ENCODE measurements at regions of chr6 and their contacts with region 1.

Region 1: DNA sequence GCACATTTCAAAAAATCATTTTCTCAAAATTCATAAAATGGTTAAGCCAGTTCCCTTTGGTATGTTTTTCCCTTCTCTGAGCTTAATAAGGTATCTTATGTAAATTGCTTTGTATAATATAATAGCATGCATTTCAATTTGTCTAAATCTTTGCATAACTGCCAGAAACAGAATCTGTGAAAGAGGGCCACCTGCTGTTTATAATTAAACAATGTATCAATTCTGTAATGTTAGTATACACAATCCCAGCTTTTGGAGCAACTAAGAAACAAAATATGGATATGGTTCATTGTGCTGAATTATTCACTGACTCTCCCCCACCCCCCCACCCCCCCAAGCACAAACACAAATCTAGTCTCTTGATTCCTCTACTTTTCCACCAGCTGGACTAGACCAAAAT is 54.8 kb downstream of the GPX5 start:
- DNase-seq: no peak
- H3K4me3 Mint-ChIP-seq: no peak overlapping the region
- H3K27ac Mint-ChIP-seq: no peak overlapping the region
- H3K4me1 Mint-ChIP-seq: no peaks in the 10 kb centered on the region
- H3K27me3 Mint-ChIP-seq: peaks cover 6% of the 10 kb centered on the region

Region 2: DNA sequence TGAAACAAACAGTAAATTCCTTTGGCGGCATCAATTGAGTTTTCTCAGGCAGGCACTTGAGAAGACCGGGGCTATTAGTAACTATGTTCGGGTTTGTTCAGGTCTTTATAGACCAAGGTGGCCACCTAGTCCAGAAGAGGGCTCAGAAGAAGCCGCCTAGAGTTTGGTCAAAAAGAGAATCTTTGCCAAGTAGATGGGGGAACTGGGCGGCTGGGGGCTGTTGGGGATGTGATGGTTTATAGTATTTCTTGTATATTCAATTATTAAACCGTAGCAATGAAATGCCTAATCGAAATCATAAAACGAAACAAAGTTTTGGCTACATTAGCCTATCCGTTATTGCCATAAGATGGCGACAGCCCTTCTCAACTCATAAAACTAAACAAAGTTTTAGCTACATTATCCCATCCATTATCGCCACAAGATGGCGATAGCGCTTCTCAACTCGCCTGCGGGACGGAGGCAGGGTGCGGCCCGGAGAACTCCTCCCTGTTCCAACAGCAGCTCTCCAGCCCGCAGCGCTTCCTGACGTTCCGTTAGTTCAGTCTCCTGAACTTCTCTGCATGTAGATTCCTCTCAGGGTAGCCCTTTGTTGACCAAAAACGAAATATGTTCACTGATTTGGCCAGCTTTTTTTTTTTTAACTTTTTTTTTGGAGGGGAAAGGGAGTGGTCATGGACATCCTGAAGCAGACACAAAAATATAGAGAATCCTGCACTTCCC is 1453.5 kb before region 1 on chr6:
- intact Hi-C with region 1: no loop called
- DNase-seq: peak; percentile 83
- H3K4me3 Mint-ChIP-seq: peak overlapping the region; percentile 88
- H3K27ac Mint-ChIP-seq: peak overlapping the region; percentile 90
- H3K4me1 Mint-ChIP-seq: peaks cover 37% of the 10 kb centered on the region
- H3K27me3 Mint-ChIP-seq: no peaks in the 10 kb centered on the region

Region 3: GRCh38 chr6:28496099-28496779 is 84.2 kb before region 1 on chr6:
- intact Hi-C with region 1: loop called (anchors 5 kb)
- DNase-seq: no peak
- H3K4me3 Mint-ChIP-seq: no peak overlapping the region
- H3K27ac Mint-ChIP-seq: no peak overlapping the region
- H3K4me1 Mint-ChIP-seq: no peaks in the 10 kb centered on the region
- H3K27me3 Mint-ChIP-seq: peaks cover 22% of the 10 kb centered on the region

Region 4: DNA sequence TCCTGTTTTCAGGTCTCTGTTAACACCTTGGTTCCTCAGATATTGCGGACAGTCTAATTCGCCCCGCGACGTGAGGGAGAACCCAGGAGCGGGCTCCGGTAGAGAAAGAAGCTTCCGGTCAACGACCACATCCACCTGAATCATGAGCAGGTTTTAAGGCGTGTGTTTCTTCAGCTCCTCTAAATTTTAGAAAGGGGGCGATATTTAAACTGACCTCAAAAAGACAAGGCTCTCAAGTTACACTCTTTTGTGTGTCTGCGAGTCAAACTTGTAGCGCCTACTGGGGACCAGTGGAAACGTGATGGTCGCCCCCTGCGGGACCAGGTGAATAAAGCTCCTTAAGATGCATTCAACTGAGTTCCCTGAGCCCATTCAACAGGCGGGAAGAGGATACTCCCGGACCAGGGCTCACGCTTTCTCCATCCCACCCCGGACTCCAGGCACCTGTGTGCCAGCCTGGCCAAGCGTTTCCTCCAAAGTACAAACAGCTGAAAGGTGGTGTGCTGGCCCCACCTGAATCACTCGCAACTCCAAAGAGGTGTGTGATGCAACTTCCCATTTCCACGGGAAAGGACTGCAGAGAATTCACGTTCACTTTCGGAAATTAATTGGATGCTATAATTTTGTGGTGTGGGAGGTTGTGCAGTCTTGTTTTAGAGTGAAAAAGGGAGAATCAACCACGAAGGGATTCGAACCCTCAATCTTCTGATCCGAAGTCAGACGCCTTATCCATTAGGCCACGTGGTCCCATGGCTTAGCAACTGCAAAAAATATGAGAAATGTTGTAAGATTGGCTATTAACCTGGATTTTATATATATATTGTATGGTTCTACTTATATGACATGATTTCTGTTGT is 37.8 kb before region 1 on chr6:
- intact Hi-C with region 1: no loop called
- DNase-seq: peak; percentile 18
- H3K4me3 Mint-ChIP-seq: peak overlapping the region; percentile 77
- H3K27ac Mint-ChIP-seq: peak overlapping the region; percentile 44
- H3K4me1 Mint-ChIP-seq: peaks cover 28% of the 10 kb centered on the region
- H3K27me3 Mint-ChIP-seq: peaks cover 44% of the 10 kb centered on the region

Region 5: DNA sequence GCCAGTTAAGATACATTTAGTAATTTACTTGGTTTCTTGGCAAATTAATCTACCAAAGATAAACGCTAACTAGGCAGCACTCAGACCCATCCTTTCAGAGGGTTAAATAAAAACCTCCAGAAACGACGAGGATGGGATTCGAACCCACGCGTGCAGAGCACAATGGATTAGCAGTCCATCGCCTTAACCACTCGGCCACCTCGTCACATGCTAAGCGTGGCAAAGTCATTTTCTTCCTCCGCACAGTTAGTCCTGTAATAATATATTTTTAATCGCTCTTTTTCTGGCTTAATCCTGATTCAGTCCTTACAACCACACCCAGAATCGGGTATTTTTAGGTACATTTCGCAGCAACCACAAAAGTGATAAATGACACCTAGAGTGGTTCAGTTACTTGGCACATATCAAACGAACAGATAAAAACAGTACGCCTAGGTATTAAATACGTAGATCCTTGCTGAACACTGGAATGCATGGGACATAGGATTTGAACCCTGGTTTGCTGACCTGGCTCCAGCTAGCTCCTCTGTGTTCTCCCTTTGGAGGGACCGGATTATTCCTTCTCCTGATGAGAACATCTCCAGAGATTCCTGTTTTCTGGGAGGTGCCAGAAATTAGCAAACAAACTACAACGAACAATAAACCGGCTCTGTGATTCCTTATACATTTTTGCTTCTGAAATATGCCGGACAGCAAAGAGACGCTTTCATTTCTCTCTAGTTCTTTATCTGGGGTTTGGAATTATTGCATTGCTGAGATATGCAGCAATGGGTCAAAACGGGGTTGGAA is 16.9 kb after region 1 on chr6:
- intact Hi-C with region 1: no loop called
- DNase-seq: no peak
- H3K4me3 Mint-ChIP-seq: peak overlapping the region; percentile 37
- H3K27ac Mint-ChIP-seq: no peak overlapping the region
- H3K4me1 Mint-ChIP-seq: peaks cover 8% of the 10 kb centered on the region
- H3K27me3 Mint-ChIP-seq: peaks cover 42% of the 10 kb centered on the region

Measured in activated T-helper 1 cell treated with anti-CD3 and anti-CD28 coated beads, Interleukin-12 subunit alpha, Interleukin-12 subunit beta, Interleukin-2, Interleukin-4 antibody, amounts not matched to agents 30 ng/mL and 10 ng/mL and 1 ng/mL, durations not matched to agents 14 hours and 24 hours and 36 hours (primary cell).